OCI-LY7 (cell line): ENCODE measurements at regions of chr4 and their contacts with region 1.

Region 1: DNA sequence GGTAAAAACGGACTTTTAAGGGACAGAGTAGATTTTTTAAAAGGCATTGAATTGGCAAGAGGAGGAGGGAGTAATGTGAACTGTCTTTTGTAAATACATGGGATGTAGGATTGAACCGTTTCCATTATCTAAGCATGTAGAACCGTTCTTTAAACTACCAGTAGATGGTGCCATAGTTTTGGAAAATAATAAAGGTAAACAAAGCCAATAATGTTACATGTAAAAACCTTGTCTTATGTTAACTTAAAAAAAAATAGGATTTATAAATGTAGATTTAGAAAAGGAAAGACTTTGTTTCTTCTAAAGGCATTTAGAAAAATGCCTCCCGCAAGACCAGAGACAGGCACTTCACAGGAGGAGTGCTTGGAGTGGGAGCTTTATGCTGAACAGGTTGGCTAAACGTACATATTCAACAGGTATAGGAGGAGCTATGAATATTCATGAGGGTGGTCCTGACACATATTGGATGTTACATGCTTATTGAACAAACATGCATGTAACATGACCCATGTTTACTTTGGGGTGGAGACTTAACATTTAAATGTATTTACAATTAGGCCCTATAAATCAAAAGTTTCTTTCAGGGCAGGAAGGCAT is 45.5 kb upstream of the FAM241A start:
- DNase-seq: peak; percentile 63
- H3K4me3 ChIP-seq: no peak overlapping the region
- H3K27ac ChIP-seq: no peak overlapping the region
- H3K4me1 ChIP-seq: no peaks in the 10 kb centered on the region
- CTCF ChIP-seq: peak; percentile 97

Region 2: DNA sequence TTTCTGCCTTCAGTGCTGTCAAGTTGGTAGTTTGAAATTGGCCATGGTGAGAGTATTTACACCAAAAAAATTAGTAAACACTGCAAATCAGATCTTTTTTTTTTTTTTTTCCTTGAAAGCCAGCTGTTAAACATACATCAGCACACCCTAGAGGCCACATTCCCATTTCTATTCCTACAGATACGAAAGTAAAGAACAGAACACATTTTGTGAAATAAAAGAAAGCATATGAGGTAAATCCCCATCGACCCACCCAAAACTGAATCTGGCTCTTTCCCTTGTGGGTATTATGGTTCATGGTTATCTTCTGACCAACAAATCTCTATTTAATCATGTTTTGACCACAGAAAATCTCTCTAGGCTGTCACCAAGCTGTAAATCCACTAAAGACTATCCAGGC is 90.0 kb after region 1 on chr4:
- CTCF ChIA-PET with region 1: no interaction called
- POLR2A ChIA-PET with region 1: interaction called, 5 read pairs
- intact Hi-C with region 1: loop called (anchors 5 kb)
- DNase-seq: no peak
- H3K4me3 ChIP-seq: no peak overlapping the region
- H3K27ac ChIP-seq: no peak overlapping the region
- H3K4me1 ChIP-seq: no peaks in the 10 kb centered on the region
- CTCF ChIP-seq: peak; percentile 37; the same call in 1 of the 2 replicates

Region 3: GRCh38 chr4:112321776-112322684 is 222.2 kb after region 1 on chr4:
- CTCF ChIA-PET with region 1: no interaction called
- POLR2A ChIA-PET with region 1: interaction called, 3 read pairs
- intact Hi-C with region 1: loop called (anchors 5 kb)
- DNase-seq: peak; percentile 76
- H3K4me3 ChIP-seq: no peak overlapping the region
- H3K27ac ChIP-seq: no peak overlapping the region
- H3K4me1 ChIP-seq: peaks cover 8% of the 10 kb centered on the region
- CTCF ChIP-seq: peak; percentile 100

Region 4: GRCh38 chr4:112536123-112536522 is 436.3 kb after region 1 on chr4:
- CTCF ChIA-PET with region 1: no interaction called
- POLR2A ChIA-PET with region 1: no interaction called
- intact Hi-C with region 1: no loop called
- DNase-seq: no peak
- H3K4me3 ChIP-seq: no peak overlapping the region
- H3K27ac ChIP-seq: no peak overlapping the region
- H3K4me1 ChIP-seq: no peaks in the 10 kb centered on the region
- CTCF ChIP-seq: no peak